Activated naive CD4-positive, alpha-beta T cell treated with anti-CD3 and anti-CD28 coated beads for 36 hours (primary cell): ENCODE measurements at regions of chr7 and their contacts with region 1.

Region 1: GRCh38 chr7:149586646-149587332 is 89.2 kb upstream of the ZNF746 start:
- DNase-seq: no peak
- H3K4me3 Mint-ChIP-seq: no peak overlapping the region
- H3K27ac Mint-ChIP-seq: no peak overlapping the region
- H3K4me1 Mint-ChIP-seq: peaks cover 7% of the 10 kb centered on the region
- H3K27me3 Mint-ChIP-seq: no peaks in the 10 kb centered on the region

Region 2: DNA sequence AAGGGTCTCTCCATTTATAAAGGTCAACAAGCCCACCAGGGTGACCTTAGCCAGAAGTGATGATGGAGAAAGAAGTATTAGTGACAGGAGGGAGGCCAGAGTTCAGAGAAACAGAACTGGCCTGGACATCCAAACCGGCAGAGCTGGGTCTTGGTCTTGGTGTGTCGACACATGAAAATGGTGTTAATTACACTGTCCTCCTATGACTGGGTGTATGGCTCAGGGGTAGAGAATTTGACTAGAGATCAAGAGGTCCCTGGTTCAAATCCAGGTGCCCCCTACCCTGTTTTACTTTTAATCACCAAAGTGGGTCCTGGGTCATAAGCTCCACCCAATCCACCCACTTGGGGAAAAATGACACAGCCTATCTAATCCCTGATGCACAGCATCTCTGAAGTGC is 21.4 kb after region 1 on chr7:
- CTCF ChIA-PET with region 1: no interaction called
- intact Hi-C with region 1: loop called (anchors 1 kb)
- DNase-seq: no peak
- H3K4me3 Mint-ChIP-seq: no peak overlapping the region
- H3K27ac Mint-ChIP-seq: no peak overlapping the region
- H3K4me1 Mint-ChIP-seq: peaks cover 5% of the 10 kb centered on the region
- H3K27me3 Mint-ChIP-seq: no peaks in the 10 kb centered on the region